ENCODE measurements at regions of chr6 and their contacts with region 1.

Region 1: DNA sequence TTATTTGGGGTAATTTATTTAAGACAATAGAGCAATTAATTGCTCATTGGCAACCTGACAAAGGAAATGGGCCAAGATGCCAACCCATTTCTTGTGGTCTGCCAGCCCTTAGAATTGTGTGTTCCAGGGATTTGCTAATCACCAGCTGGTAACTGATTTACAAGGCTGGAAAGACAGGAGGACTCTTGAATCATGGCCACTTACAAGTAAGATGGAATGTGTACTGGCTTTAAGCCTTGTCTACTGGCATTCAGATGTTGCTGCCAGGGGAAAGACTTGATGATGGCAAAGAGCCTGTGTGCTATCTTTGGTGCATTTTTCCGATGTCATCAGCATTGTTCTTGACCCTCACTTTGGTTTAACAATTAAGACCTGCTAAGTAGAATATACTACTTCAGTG is 91.0 kb downstream of the BCKDHB start:
- DNase-seq: peak in 1 of 2 donors; percentile 26
- ATAC-seq: peak in 7 of 8 donors; percentile 63 to 97 (median 96)
- H3K4me3 ChIP-seq: no peak overlapping the region
- H3K27ac ChIP-seq: peak overlapping the region in 2 of 10 donors; percentile 19 to 46
- H3K4me1 ChIP-seq: peaks cover 0 to 16% (median 0%) of the 10 kb centered on the region in 9 donors
- H3K27me3 ChIP-seq: no peaks in the 10 kb centered on the region
- CTCF ChIP-seq: no peak

Region 2: DNA sequence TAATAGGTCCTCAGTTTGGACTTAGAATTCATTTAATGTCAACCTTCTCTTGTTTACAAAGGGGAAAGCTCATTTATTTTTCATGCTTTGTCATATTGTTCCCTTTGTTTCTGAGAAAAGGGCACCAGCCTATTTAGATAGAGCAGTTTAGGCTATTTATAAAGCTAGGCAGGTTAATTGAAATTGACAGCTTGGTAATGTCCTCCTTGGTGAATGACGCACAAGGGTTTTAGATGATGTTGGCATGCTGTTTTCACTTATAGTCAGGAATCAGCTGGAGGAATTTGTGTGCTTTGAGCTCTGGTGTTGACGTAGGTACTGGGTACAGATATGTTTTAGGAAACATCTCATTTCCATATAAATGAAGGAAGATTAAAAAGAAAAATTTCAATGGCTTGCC is 45.8 kb before region 1 on chr6:
- intact Hi-C with region 1: loop called in 2 of 10 experiments (anchors 5 kb)
- DNase-seq: no peak
- ATAC-seq: peak in 5 of 8 donors; percentile 78 to 95 (median 91)
- H3K4me3 ChIP-seq: no peak overlapping the region
- H3K27ac ChIP-seq: peak overlapping the region in 1 of 10 donors; percentile 64
- H3K4me1 ChIP-seq: peaks cover 0 to 6% (median 0%) of the 10 kb centered on the region in 9 donors
- H3K27me3 ChIP-seq: no peaks in the 10 kb centered on the region
- CTCF ChIP-seq: no peak

Region 3: GRCh38 chr6:80158478-80158989 is 38.9 kb before region 1 on chr6:
- intact Hi-C with region 1: loop called in 2 of 10 experiments (anchors 5 kb)
- DNase-seq: no peak
- ATAC-seq: peak in 1 of 8 donors; percentile 43
- H3K4me3 ChIP-seq: no peak overlapping the region
- H3K27ac ChIP-seq: no peak overlapping the region
- H3K4me1 ChIP-seq: peaks cover 0 to 6% (median 0%) of the 10 kb centered on the region in 9 donors
- H3K27me3 ChIP-seq: no peaks in the 10 kb centered on the region
- CTCF ChIP-seq: no peak

Region 4: GRCh38 chr6:81241126-81242041 is 1043.9 kb after region 1 on chr6:
- intact Hi-C with region 1: loop called in 1 of 10 experiments (anchors 5 kb)
- DNase-seq: no peak
- ATAC-seq: no peak
- H3K4me3 ChIP-seq: no peak overlapping the region
- H3K27ac ChIP-seq: no peak overlapping the region
- H3K4me1 ChIP-seq: no peaks in the 10 kb centered on the region
- H3K27me3 ChIP-seq: no peaks in the 10 kb centered on the region
- CTCF ChIP-seq: peak in 8 of 9 donors; percentile 13 to 65 (median 48)